Mammary epithelial cell (primary cell): ENCODE measurements at regions of chr12 and their contacts with region 1.

Region 1: GRCh38 chr12:66087365-66087943 is 43.1 kb downstream of the LLPH start:
- DNase-seq: peak; percentile 54
- H3K4me3 ChIP-seq: no peak overlapping the region
- H3K27ac ChIP-seq: no peak overlapping the region
- H3K4me1 ChIP-seq: no peaks in the 10 kb centered on the region
- H3K27me3 ChIP-seq: no peaks in the 10 kb centered on the region
- CTCF ChIP-seq: peak; percentile 88

Region 2: DNA sequence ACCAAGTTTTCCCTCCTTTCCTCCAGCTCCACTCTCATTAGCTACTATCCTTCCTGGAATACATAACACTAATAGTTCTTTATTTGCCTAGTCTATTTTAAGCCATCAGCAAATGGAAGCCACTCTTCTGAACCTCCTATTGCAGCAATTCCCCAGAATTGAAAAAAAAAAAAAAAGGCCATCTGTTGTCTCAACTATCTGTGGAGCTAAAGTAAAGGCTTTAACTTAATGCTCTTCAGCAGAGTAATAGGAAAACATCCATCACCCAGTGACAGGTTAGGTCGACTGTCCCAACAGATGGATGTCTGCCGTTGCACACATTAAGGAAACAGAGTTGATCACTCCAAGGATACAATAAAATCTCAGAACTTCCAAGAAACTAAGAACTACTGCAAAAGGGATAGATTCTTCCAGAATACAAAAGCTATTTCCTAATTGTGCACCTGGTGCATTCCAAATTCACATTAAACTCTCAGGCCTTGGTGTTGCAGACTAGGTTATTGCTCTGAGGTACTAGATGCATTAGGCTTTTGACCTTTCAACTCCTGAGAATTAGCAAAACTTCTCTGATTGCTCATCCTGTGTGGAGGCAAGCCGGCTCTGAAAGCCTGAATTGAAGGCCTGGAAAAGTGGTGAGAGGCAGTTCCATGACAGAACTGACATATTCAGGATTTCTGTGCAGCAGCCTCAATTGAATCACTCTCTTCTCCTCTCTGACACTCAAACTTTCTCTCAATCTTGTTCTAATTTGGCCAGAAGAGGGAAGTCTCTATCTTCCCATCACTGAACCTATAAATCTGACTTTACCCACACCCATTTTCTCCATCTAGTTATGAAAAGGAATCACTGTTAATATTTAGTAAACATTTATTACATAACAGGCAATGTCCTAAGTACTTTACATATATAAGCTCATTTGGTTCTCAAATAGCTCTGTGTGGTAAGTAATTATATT is 501.5 kb before region 1 on chr12:
- CTCF ChIA-PET with region 1: no interaction called
- dilution Hi-C with region 1: no loop called
- in situ Hi-C with region 1: no loop called
- intact Hi-C with region 1: no loop called
- DNase-seq: no peak
- H3K4me3 ChIP-seq: no peak overlapping the region
- H3K27ac ChIP-seq: no peak overlapping the region
- H3K4me1 ChIP-seq: peaks cover 9% of the 10 kb centered on the region
- H3K27me3 ChIP-seq: no peaks in the 10 kb centered on the region
- CTCF ChIP-seq: no peak

Region 3: DNA sequence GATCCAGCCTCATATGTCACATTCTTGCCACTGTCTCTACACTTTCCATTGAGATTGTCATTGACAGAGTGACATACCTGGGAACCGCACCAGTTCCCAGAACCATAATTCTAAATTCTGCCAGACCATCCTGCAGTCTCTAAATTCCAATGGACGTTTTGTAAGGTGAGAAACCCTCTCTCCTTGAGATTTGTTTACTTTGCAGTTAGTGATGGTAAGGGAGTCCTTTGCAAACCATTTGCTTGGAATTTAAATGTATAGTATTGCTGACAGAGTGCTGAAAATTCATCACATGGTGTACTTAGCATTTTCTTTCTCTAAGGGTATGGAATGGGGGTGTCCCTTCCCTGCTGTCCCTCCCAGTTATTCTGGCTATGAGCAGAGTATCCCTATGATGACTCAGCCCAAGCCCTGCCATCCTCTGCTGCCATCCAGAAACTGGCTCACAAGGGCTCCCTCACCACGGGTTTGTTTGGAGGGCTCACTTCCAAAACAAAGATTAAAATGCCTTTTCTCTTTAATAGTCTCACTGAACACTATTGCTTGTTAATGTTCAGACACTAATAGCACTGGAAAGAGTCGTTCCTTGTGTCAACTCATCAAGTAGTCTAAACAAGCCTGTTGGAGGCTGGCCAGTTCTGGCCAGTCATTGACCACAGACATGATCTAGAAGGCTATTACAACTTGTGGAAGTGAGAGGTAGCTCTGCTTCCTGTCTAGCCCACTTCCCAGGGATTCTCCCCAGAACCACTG is 392.2 kb before region 1 on chr12:
- CTCF ChIA-PET with region 1: no interaction called
- dilution Hi-C with region 1: no loop called
- in situ Hi-C with region 1: no loop called
- intact Hi-C with region 1: loop called (anchors 1 kb)
- DNase-seq: peak; percentile 98
- H3K4me3 ChIP-seq: no peak overlapping the region
- H3K27ac ChIP-seq: peak overlapping the region; percentile 67
- H3K4me1 ChIP-seq: peaks cover 28% of the 10 kb centered on the region
- H3K27me3 ChIP-seq: no peaks in the 10 kb centered on the region
- CTCF ChIP-seq: no peak

Region 4: DNA sequence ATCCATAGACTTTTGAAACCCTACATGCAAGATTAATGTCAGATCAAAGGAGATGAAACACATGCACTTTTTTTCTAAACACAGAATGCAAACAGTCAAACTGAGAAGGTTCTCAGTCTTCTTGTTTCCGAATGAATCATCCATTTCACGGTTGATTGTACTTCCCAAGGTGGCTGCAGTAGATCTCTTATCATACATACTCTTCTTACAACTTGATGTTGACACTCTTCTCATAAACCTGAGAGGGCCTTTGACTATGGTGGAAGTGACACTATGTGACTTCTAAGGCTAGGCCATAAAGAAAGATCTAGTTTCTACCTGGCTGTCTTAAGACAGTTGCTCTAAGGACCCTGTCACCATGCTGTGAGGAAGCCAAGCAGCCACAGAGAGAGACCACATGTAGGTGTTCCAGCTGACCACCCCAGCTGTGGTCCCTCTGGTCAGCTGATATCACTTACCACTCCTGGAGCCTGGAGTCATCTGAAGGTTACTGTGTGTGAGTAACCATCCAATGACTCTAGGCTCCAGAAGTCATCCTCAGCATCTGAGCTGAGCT is 330.4 kb before region 1 on chr12:
- CTCF ChIA-PET with region 1: no interaction called
- dilution Hi-C with region 1: no loop called
- in situ Hi-C with region 1: no loop called
- intact Hi-C with region 1: loop called (anchors 10 kb)
- DNase-seq: no peak
- H3K4me3 ChIP-seq: no peak overlapping the region
- H3K27ac ChIP-seq: no peak overlapping the region
- H3K4me1 ChIP-seq: no peaks in the 10 kb centered on the region
- H3K27me3 ChIP-seq: no peaks in the 10 kb centered on the region
- CTCF ChIP-seq: no peak

Region 5: DNA sequence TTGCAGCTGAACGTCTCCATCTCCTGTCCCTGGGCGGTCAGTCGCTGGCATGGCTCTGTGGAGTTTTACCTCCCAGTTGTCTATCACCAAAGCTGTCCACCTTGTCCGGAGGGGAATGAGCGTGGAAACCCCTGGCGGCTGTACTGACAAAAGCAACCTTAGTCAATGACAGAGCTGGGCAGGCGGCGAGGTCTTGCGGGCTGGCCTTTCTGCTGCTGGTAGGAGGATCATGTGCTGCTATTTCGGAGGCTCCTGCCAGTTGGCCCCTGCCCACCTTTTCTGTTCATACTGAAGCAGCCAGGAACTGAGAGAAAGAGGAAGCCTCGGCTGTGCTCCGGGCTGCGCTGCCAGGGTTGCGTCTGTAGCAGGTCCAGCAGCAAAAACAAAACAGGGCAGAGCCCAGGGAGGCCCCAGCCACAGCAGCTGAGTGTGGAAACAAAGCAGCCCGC is 205.5 kb before region 1 on chr12:
- CTCF ChIA-PET with region 1: no interaction called
- dilution Hi-C with region 1: no loop called
- in situ Hi-C with region 1: no loop called
- intact Hi-C with region 1: loop called (anchors 5 kb)
- DNase-seq: no peak
- H3K4me3 ChIP-seq: no peak overlapping the region
- H3K27ac ChIP-seq: no peak overlapping the region
- H3K4me1 ChIP-seq: peaks cover 46% of the 10 kb centered on the region
- H3K27me3 ChIP-seq: no peaks in the 10 kb centered on the region
- CTCF ChIP-seq: peak in 1 of 2 donors; percentile 22

Region 6: GRCh38 chr12:65965358-65965757 is 122.1 kb before region 1 on chr12:
- CTCF ChIA-PET with region 1: no interaction called
- dilution Hi-C with region 1: no loop called
- in situ Hi-C with region 1: no loop called
- intact Hi-C with region 1: loop called (anchors 5 kb)
- DNase-seq: no peak
- H3K4me3 ChIP-seq: no peak overlapping the region
- H3K27ac ChIP-seq: no peak overlapping the region
- H3K4me1 ChIP-seq: no peaks in the 10 kb centered on the region
- H3K27me3 ChIP-seq: no peaks in the 10 kb centered on the region
- CTCF ChIP-seq: no peak

Region 7: DNA sequence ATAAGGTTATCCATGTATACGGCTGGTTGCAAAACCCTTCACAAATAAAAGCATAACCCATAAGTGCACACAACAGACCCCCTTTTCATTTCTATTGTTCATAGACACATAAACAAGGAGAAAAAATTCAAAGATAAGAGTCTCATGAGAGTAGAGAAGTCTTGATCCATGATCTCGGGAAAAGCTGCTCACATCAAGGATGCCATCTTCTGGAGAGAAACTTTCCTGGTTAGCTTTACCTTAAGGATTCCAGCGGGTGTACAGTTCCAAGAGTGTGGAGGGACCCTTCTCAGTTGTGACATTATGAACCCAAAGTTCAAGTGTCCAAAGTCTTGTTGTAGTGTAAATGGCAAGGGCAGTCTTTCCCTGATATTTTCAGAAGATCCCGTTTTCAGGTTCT is 101.4 kb before region 1 on chr12:
- CTCF ChIA-PET with region 1: interaction called, 3 read pairs
- dilution Hi-C with region 1: no loop called
- in situ Hi-C with region 1: no loop called
- intact Hi-C with region 1: loop called (anchors 1 kb)
- DNase-seq: no peak
- H3K4me3 ChIP-seq: no peak overlapping the region
- H3K27ac ChIP-seq: no peak overlapping the region
- H3K4me1 ChIP-seq: no peaks in the 10 kb centered on the region
- H3K27me3 ChIP-seq: no peaks in the 10 kb centered on the region
- CTCF ChIP-seq: no peak

Region 8: GRCh38 chr12:66035288-66035966 is 52.0 kb before region 1 on chr12:
- CTCF ChIA-PET with region 1: no interaction called
- dilution Hi-C with region 1: no loop called
- in situ Hi-C with region 1: no loop called
- intact Hi-C with region 1: loop called (anchors 2 kb)
- DNase-seq: peak; percentile 52
- H3K4me3 ChIP-seq: no peak overlapping the region
- H3K27ac ChIP-seq: peak overlapping the region; percentile 26
- H3K4me1 ChIP-seq: peaks cover 19% of the 10 kb centered on the region
- H3K27me3 ChIP-seq: no peaks in the 10 kb centered on the region
- CTCF ChIP-seq: peak; percentile 55 to 74

Region 9: GRCh38 chr12:66176105-66176900 is 88.8 kb after region 1 on chr12:
- CTCF ChIA-PET with region 1: no interaction called
- dilution Hi-C with region 1: no loop called
- in situ Hi-C with region 1: no loop called
- intact Hi-C with region 1: no loop called
- DNase-seq: no peak
- H3K4me3 ChIP-seq: no peak overlapping the region
- H3K27ac ChIP-seq: no peak overlapping the region
- H3K4me1 ChIP-seq: no peaks in the 10 kb centered on the region
- H3K27me3 ChIP-seq: no peaks in the 10 kb centered on the region
- CTCF ChIP-seq: no peak